Mammary epithelial cell (primary cell): ENCODE measurements at regions of chr18 and their contacts with region 1.

Region 1: GRCh38 chr18:49656073-49656591 is 94.3 kb downstream of the LIPG start:
- DNase-seq: peak; percentile 99
- H3K4me3 ChIP-seq: no peak overlapping the region
- H3K27ac ChIP-seq: no peak overlapping the region
- H3K4me1 ChIP-seq: peaks cover 14% of the 10 kb centered on the region
- H3K27me3 ChIP-seq: no peaks in the 10 kb centered on the region
- CTCF ChIP-seq: no peak

Region 2: DNA sequence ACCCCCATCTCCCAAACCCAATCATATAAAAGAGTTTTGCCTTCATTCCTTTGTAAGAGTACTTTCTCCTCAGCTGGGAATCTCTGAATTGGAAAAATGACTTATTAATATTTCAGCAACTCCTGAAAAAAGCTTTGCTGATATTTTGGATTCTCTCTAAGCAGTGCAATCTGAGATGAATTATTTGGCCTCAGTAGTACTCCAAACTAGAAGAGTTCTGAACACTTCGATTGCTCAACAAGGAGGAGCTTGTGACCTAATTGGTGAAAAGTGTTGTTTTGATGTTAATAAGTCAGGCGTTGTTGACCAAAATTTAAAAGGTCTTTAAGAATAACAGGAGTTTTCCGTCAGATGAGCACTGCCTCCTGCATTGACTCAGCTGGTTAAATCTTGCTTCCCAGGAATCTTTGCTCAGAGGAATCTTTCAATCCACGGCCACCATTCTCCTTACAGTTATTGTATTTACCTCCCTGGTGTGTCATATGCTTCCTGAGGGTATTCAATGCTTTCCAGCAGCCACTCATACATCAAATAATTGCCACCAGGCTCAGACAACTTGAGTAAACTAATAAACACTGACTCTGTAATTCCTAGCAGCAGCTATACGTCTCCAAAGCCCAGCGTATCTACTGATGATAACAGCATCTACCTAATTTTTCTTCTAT is 118.8 kb before region 1 on chr18:
- CTCF ChIA-PET with region 1: no interaction called
- dilution Hi-C with region 1: no loop called
- in situ Hi-C with region 1: no loop called
- intact Hi-C with region 1: no loop called
- DNase-seq: no peak
- H3K4me3 ChIP-seq: no peak overlapping the region
- H3K27ac ChIP-seq: no peak overlapping the region
- H3K4me1 ChIP-seq: no peaks in the 10 kb centered on the region
- H3K27me3 ChIP-seq: no peaks in the 10 kb centered on the region
- CTCF ChIP-seq: no peak

Region 3: GRCh38 chr18:49609256-49610021 is 46.7 kb before region 1 on chr18:
- CTCF ChIA-PET with region 1: no interaction called
- dilution Hi-C with region 1: no loop called
- in situ Hi-C with region 1: no loop called
- intact Hi-C with region 1: loop called (anchors 1 kb)
- DNase-seq: peak; percentile 99
- H3K4me3 ChIP-seq: no peak overlapping the region
- H3K27ac ChIP-seq: peak overlapping the region; percentile 96
- H3K4me1 ChIP-seq: peaks cover 34% of the 10 kb centered on the region
- H3K27me3 ChIP-seq: no peaks in the 10 kb centered on the region
- CTCF ChIP-seq: no peak

Region 4: DNA sequence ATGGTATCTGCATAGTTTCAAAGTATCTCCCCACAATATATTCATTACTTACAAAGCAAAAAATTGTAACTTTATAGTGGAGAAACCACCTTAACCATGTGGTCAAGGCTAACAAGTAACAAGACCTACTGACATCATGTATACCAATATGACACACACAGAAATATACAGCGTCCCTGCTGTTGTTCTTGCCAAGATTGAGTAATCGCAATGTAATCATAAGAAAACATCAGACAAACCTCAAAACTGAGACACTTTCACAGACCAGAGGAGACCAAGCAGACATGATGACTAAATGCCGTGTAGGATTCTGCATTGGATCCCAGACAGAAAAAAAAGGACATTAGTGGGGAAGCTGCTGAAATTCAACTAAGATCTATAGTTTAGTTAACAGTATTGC is 34.2 kb after region 1 on chr18:
- CTCF ChIA-PET with region 1: interaction called, 4 read pairs
- dilution Hi-C with region 1: no loop called
- in situ Hi-C with region 1: no loop called
- intact Hi-C with region 1: loop called (anchors 1 kb)
- DNase-seq: peak; percentile 99
- H3K4me3 ChIP-seq: no peak overlapping the region
- H3K27ac ChIP-seq: peak overlapping the region; percentile 72
- H3K4me1 ChIP-seq: peaks cover 24% of the 10 kb centered on the region
- H3K27me3 ChIP-seq: no peaks in the 10 kb centered on the region
- CTCF ChIP-seq: no peak

Region 5: DNA sequence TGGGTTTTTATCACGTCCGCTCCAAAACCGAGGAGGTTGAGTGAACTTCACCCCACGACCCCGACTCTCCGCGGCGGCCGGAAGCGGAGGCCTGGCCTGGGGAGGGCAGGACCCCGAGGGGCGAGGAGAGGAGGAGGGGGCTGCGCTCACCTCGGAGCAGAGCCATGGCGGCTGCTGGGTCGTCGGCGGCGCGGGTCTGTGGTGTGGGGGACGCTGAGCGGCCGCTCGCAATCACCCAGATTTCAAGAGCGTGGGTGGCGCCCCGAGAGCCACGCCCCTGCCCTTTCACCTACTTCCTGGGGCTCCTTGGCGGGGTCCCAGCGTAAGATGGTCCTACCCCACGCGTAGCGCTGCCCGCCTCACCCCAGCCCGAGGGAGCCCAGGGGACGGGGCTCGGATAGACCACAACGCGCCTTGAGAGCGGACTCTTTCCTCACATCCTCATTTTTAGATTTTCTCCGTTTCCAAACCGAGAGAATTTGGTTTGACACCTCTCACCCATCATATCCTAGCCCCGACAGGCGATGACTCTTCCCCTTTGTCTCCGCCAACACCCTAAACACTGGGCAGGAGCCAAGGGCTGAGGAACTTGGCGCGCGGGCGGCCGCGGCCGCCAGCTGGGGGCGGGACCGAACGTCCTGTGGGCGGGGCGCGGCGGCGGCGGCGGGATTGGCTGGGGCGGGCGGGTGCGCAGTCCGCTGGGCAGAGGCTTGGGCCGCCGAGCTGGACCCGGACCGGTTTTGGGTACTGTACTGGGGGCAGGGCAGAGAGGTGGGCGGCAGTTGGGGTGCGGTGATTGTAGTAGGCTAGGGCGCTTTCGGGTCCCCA is 157.4 kb after region 1 on chr18 and contains the start of gene ACAA2:
- CTCF ChIA-PET with region 1: no interaction called
- dilution Hi-C with region 1: no loop called
- in situ Hi-C with region 1: no loop called
- intact Hi-C with region 1: no loop called
- DNase-seq: peak; percentile 87
- H3K4me3 ChIP-seq: peak within 1 kb of the TSS; percentile 61 to 96 (median 92)
- H3K27ac ChIP-seq: peak within 1 kb of the TSS; percentile 92
- H3K4me1 ChIP-seq: peaks cover 12% of the 10 kb centered on the region
- H3K27me3 ChIP-seq: no peaks in the 10 kb centered on the region
- CTCF ChIP-seq: no peak
- total RNA-seq, gene ACAA2: 42.2 to 45.9 TPM